MCF 10A (cell line): ENCODE measurements at regions of chr15 and their contacts with region 1.

Region 1: GRCh38 chr15:33226559-33227181 is 32.2 kb upstream of the FMN1 start:
- DNase-seq: peak; percentile 65
- H3K4me3 Mint-ChIP-seq: no peak overlapping the region
- H3K27ac Mint-ChIP-seq: no peak overlapping the region
- H3K4me1 Mint-ChIP-seq: no peaks in the 10 kb centered on the region
- H3K27me3 Mint-ChIP-seq: peaks cover 14% of the 10 kb centered on the region
- CTCF ChIP-seq: peak; percentile 51

Region 2: GRCh38 chr15:33154351-33155166 is 72.1 kb before region 1 on chr15:
- CTCF ChIA-PET with region 1: no interaction called
- POLR2A ChIA-PET with region 1: no interaction called
- intact Hi-C with region 1: no loop called
- DNase-seq: peak; percentile 58
- H3K4me3 Mint-ChIP-seq: no peak overlapping the region
- H3K27ac Mint-ChIP-seq: no peak overlapping the region
- H3K4me1 Mint-ChIP-seq: peaks cover 14% of the 10 kb centered on the region
- H3K27me3 Mint-ChIP-seq: no peaks in the 10 kb centered on the region
- CTCF ChIP-seq: no peak

Region 3: GRCh38 chr15:33182278-33182905 is 44.3 kb before region 1 on chr15:
- CTCF ChIA-PET with region 1: no interaction called
- POLR2A ChIA-PET with region 1: no interaction called
- intact Hi-C with region 1: no loop called
- DNase-seq: no peak
- H3K4me3 Mint-ChIP-seq: no peak overlapping the region
- H3K27ac Mint-ChIP-seq: no peak overlapping the region
- H3K4me1 Mint-ChIP-seq: no peaks in the 10 kb centered on the region
- H3K27me3 Mint-ChIP-seq: no peaks in the 10 kb centered on the region
- CTCF ChIP-seq: no peak

Region 4: DNA sequence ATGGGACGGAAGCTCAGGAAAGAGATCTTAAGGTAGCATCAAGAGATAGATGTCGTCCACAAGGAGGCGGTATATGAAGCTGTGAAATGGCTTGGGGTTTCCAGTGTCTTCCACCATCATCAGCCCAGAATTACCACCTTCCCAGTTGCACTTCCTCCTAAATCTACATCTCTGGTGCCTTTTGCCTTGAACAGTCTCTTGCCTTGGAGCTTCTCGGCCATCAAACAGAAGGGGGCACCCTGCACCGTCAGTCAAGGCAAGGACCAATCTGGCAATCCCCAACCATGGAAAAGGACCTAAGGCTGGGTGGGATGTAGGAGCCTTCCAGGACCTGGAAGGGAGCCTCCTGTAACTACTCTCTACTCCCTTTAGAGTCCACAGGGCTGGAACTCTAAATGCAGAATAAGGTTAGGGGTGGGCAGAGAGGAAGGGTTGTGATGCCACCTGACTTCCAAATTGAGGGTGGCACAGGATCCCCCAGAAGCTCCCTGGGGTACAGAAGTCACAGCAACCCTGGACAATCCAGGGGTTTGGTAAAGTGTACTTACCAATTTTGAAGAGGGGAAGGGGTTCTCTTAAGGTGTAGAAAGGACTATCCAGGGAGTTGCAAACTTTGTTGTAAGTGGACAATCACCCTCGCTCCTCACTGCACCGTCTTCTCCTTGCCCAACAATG is 83.1 kb after region 1 on chr15:
- CTCF ChIA-PET with region 1: no interaction called
- POLR2A ChIA-PET with region 1: no interaction called
- intact Hi-C with region 1: no loop called
- DNase-seq: no peak
- H3K4me3 Mint-ChIP-seq: no peak overlapping the region
- H3K27ac Mint-ChIP-seq: no peak overlapping the region
- H3K4me1 Mint-ChIP-seq: peaks cover 6% of the 10 kb centered on the region
- H3K27me3 Mint-ChIP-seq: peaks cover 41% of the 10 kb centered on the region
- CTCF ChIP-seq: no peak

Region 5: GRCh38 chr15:33460149-33460805 is 233.6 kb after region 1 on chr15:
- CTCF ChIA-PET with region 1: no interaction called
- POLR2A ChIA-PET with region 1: no interaction called
- intact Hi-C with region 1: no loop called
- DNase-seq: peak; percentile 5
- H3K4me3 Mint-ChIP-seq: no peak overlapping the region
- H3K27ac Mint-ChIP-seq: no peak overlapping the region
- H3K4me1 Mint-ChIP-seq: no peaks in the 10 kb centered on the region
- H3K27me3 Mint-ChIP-seq: peaks cover 6% of the 10 kb centered on the region
- CTCF ChIP-seq: no peak

Region 6: DNA sequence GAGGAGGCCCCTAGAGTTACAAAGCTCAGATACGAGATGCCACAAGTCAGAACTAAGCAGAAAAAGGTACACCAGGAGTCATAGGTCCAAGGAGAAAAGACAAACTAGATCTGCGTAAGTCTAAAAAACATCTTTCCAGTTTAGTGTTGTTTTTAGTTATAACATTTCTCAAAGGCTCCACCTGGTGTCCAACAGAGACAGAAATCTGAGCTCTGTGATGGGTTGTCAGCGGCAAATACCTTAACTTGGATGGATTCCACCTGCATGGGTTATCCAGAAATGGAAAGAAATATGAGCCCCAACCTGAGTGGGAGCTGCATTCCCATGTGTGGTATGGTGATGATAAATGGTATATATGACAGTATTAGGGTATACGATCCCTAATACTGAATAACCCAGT is 503.0 kb after region 1 on chr15:
- CTCF ChIA-PET with region 1: interaction called, 45 read pairs
- POLR2A ChIA-PET with region 1: no interaction called
- intact Hi-C with region 1: no loop called
- DNase-seq: peak; percentile 43
- H3K4me3 Mint-ChIP-seq: no peak overlapping the region
- H3K27ac Mint-ChIP-seq: no peak overlapping the region
- H3K4me1 Mint-ChIP-seq: no peaks in the 10 kb centered on the region
- H3K27me3 Mint-ChIP-seq: no peaks in the 10 kb centered on the region
- CTCF ChIP-seq: peak; percentile 39